ENCODE measurements at regions of chr5 and their contacts with region 1.

Region 1: GRCh38 chr5:82225525-82226172 is 52.5 kb downstream of the RPS23 start:
- DNase-seq: peak; percentile 69 to 76 (median 72)
- ATAC-seq: peak; percentile 97
- H3K4me3 ChIP-seq: no peak overlapping the region
- H3K27ac ChIP-seq: no peak overlapping the region
- H3K4me1 ChIP-seq: no peaks in the 10 kb centered on the region
- H3K27me3 ChIP-seq: no peaks in the 10 kb centered on the region
- CTCF ChIP-seq: peak; percentile 82 to 89 (median 87)
- EP300 ChIP-seq: no peak
- POLR2A ChIP-seq: no peak
- RAD21 ChIP-seq: peak; percentile 82 to 93

Region 2: DNA sequence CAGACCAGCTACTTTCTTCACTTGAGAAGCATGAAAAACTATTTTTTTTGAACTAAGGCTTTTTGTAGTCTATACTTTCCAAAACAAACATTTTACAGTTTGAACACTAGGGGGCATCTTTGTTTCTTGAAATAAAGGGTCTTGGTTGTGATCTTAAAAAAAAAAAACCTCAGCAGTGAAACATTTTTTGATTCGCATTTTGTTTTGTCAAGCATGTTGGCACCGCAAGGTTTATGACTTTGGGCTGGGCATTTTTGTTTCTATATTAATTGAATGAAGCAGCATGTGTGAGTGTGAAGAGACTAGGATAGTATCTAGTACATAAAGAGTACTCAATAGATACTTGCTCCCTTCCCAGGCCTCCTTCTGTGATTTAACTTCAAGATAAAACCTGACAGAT is 800.1 kb before region 1 on chr5:
- CTCF ChIA-PET with region 1: interaction called, 7 read pairs
- POLR2A ChIA-PET with region 1: no interaction called
- in situ Hi-C with region 1: no loop called
- intact Hi-C with region 1: loop called (anchors 5 kb)
- DNase-seq: peak; percentile 16 to 28 (median 19)
- ATAC-seq: peak; percentile 78
- H3K4me3 ChIP-seq: no peak overlapping the region
- H3K27ac ChIP-seq: no peak overlapping the region
- H3K4me1 ChIP-seq: peaks cover 0 to 3% of the 10 kb centered on the region in 2 experiments; a peak in 3 of 5 replicates
- H3K27me3 ChIP-seq: no peaks in the 10 kb centered on the region
- CTCF ChIP-seq: peak; percentile 46 to 66 (median 47); a peak in 4 of 6 replicates
- EP300 ChIP-seq: no peak
- POLR2A ChIP-seq: no peak
- RAD21 ChIP-seq: peak; percentile 66 to 70

Region 3: DNA sequence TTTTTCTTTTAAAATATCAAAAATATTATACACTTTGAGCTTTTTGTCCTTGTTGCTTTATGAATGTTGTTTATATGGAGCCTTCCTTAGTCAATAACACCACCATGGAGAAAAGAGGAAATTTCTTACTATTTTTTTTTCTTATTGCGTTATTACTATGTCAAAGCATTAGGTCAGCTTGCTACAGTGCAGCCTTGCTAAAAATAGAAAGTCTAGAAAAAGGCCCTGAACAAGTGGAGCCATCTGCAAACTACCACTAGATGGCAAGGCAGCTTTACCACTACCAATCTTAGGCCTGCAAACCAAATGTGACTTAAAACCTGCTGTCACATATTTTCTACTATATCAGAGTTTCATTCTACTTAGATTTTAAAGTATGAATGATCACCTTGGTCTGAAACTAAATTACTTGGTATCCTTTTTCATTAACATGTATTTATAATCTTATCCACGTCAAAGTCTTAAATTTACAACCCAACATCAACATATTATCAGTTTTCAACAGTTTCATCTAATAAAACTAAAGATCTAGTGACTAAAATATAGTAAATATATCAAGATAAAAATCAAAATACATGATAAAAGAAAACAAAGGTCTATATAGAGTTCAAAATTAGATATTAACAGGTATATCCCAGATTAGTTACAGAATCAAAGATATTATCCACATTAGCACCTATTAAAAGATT is 718.6 kb before region 1 on chr5:
- CTCF ChIA-PET with region 1: interaction called, 6 read pairs
- POLR2A ChIA-PET with region 1: no interaction called
- in situ Hi-C with region 1: no loop called
- intact Hi-C with region 1: loop called (anchors 1 kb)
- DNase-seq: peak; percentile 30 to 83 (median 61)
- ATAC-seq: peak; percentile 100
- H3K4me3 ChIP-seq: no peak overlapping the region
- H3K27ac ChIP-seq: no peak overlapping the region; the same call in 2 of the 3 replicates
- H3K4me1 ChIP-seq: peaks cover 0 to 9% of the 10 kb centered on the region in 2 experiments; a peak in 2 of 5 replicates
- H3K27me3 ChIP-seq: no peaks in the 10 kb centered on the region
- CTCF ChIP-seq: peak; percentile 72 to 93 (median 80)
- EP300 ChIP-seq: no peak; the same call in 1 of the 2 replicates
- POLR2A ChIP-seq: no peak
- RAD21 ChIP-seq: peak; percentile 93 to 94

Region 4: GRCh38 chr5:82107267-82107666 is 118.4 kb before region 1 on chr5:
- CTCF ChIA-PET with region 1: no interaction called
- POLR2A ChIA-PET with region 1: no interaction called
- in situ Hi-C with region 1: no loop called
- intact Hi-C with region 1: loop called (anchors 5 kb)
- DNase-seq: peak in 2 of 4 experiments; percentile 21 to 25
- ATAC-seq: peak; percentile 68
- H3K4me3 ChIP-seq: no peak overlapping the region
- H3K27ac ChIP-seq: peak overlapping the region; percentile 20; the same call in 1 of the 3 replicates
- H3K4me1 ChIP-seq: peaks cover 0 to 5% of the 10 kb centered on the region in 2 experiments; a peak in 3 of 5 replicates
- H3K27me3 ChIP-seq: no peaks in the 10 kb centered on the region
- CTCF ChIP-seq: peak in 2 of 3 experiments; percentile 46 to 62; a peak in 5 of 6 replicates
- EP300 ChIP-seq: no peak
- POLR2A ChIP-seq: no peak
- RAD21 ChIP-seq: peak; percentile 54 to 57

Region 5: DNA sequence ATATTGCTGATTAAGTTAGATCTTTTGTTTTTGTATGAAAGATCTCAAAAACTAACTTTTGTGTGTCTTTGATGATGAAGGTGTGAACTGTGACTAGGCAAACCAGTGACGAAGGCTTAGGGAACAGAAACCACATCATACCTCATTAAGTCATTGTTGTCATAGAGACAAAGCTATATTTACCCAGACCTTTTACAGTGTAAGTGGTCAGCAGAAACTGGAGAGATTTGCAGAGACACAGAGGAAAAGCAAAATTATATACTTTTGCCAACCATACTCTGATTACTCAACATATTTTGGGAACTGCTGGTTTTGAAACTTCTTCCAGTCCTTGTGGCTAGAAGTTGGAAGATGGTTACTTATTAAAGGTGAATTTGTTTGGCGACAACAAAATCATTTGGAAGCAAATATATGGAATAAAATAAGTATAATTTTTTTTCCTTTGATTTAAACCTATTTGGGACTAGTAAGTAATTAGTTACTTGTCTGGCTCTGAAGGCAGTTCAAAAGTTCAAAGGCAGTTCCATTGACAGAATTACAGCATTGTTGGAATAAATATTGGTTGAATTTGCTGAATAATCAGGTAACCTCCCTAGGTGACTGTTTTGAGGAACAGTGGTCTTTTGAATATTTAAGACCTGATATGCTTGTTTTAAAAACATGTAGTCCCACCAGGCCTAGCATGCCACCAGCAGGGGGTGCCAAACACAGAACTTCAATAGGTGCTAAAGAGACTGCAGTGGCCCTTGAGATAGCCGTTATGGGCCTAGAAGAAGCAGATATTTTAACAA is 51.3 kb before region 1 on chr5:
- CTCF ChIA-PET with region 1: interaction called, 23 read pairs
- POLR2A ChIA-PET with region 1: no interaction called
- in situ Hi-C with region 1: no loop called
- intact Hi-C with region 1: loop called (anchors 1 kb)
- DNase-seq: peak; percentile 58 to 86 (median 66)
- ATAC-seq: peak; percentile 99
- H3K4me3 ChIP-seq: no peak overlapping the region
- H3K27ac ChIP-seq: no peak overlapping the region
- H3K4me1 ChIP-seq: no peaks in the 10 kb centered on the region; a peak in 1 of 5 replicates
- H3K27me3 ChIP-seq: no peaks in the 10 kb centered on the region
- CTCF ChIP-seq: peak; percentile 69 to 83 (median 81)
- EP300 ChIP-seq: no peak
- POLR2A ChIP-seq: no peak
- RAD21 ChIP-seq: peak; percentile 50 to 73

Region 6: GRCh38 chr5:82205005-82205404 is 20.6 kb before region 1 on chr5:
- CTCF ChIA-PET with region 1: no interaction called
- POLR2A ChIA-PET with region 1: no interaction called
- in situ Hi-C with region 1: no loop called
- intact Hi-C with region 1: no loop called
- DNase-seq: peak in 1 of 4 experiments; percentile 15
- ATAC-seq: peak; percentile 73
- H3K4me3 ChIP-seq: no peak overlapping the region
- H3K27ac ChIP-seq: peak overlapping the region; percentile 13; the same call in 2 of the 3 replicates
- H3K4me1 ChIP-seq: peaks cover 0 to 9% of the 10 kb centered on the region in 2 experiments; a peak in 2 of 5 replicates
- H3K27me3 ChIP-seq: no peaks in the 10 kb centered on the region
- CTCF ChIP-seq: no peak
- EP300 ChIP-seq: no peak
- POLR2A ChIP-seq: no peak
- RAD21 ChIP-seq: no peak

Measured in K562 (cell line).